Caco-2 (cell line): ENCODE measurements at regions of chr10 and their contacts with region 1.

Region 1: GRCh38 chr10:49734661-49735071 is 27.5 kb downstream of the OGDHL start:
- DNase-seq: peak; percentile 87 to 92
- H3K4me3 ChIP-seq: no peak overlapping the region
- H3K4me3 Mint-ChIP-seq: peak overlapping the region; percentile 20
- H3K27ac Mint-ChIP-seq: peak overlapping the region; percentile 79
- H3K4me1 ChIP-seq: peaks cover 23% of the 10 kb centered on the region
- H3K4me1 Mint-ChIP-seq: peaks cover 30% of the 10 kb centered on the region
- H3K27me3 ChIP-seq: no peaks in the 10 kb centered on the region
- H3K27me3 Mint-ChIP-seq: no peaks in the 10 kb centered on the region
- CTCF ChIP-seq: no peak

Region 2: DNA sequence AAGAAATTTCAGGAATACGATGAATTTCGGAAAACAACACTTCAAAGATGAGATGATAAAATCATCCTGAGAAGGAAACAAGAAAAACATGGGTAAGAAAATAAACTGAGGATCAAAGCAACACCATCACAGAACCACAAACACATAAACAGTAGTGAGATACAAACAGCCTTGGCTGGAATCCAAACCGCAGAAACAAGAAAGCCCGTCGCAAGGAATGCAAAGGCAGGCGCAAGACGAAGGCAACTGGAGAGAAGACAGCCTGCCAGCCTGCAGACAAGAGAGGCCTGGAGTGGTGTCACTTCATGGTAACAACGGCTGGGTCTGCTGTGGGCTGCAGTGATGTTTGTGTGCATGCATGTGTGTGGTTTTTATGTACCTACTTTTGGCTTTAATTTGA is 277.0 kb before region 1 on chr10:
- CTCF ChIA-PET with region 1: no interaction called
- POLR2A ChIA-PET with region 1: no interaction called
- intact Hi-C with region 1: no loop called
- DNase-seq: no peak
- H3K4me3 ChIP-seq: no peak overlapping the region
- H3K4me3 Mint-ChIP-seq: no peak overlapping the region
- H3K27ac Mint-ChIP-seq: no peak overlapping the region
- H3K4me1 ChIP-seq: no peaks in the 10 kb centered on the region
- H3K4me1 Mint-ChIP-seq: no peaks in the 10 kb centered on the region
- H3K27me3 ChIP-seq: no peaks in the 10 kb centered on the region
- H3K27me3 Mint-ChIP-seq: no peaks in the 10 kb centered on the region
- CTCF ChIP-seq: no peak

Region 3: GRCh38 chr10:49707585-49707984 is 27.1 kb before region 1 on chr10:
- CTCF ChIA-PET with region 1: no interaction called
- POLR2A ChIA-PET with region 1: no interaction called
- intact Hi-C with region 1: loop called (anchors 2 kb)
- DNase-seq: no peak
- H3K4me3 ChIP-seq: no peak overlapping the region
- H3K4me3 Mint-ChIP-seq: no peak overlapping the region
- H3K27ac Mint-ChIP-seq: no peak overlapping the region
- H3K4me1 ChIP-seq: no peaks in the 10 kb centered on the region
- H3K4me1 Mint-ChIP-seq: no peaks in the 10 kb centered on the region
- H3K27me3 ChIP-seq: no peaks in the 10 kb centered on the region
- H3K27me3 Mint-ChIP-seq: peaks cover 11% of the 10 kb centered on the region
- CTCF ChIP-seq: no peak